Cardiac septum (tissue), 1 donor: ENCODE measurements at regions of chr2 and their contacts with region 1.

Region 1: GRCh38 chr2:236352761-236353593 is 88.8 kb upstream of the ASB18 start:
- DNase-seq: no peak

Region 2: GRCh38 chr2:236250909-236251579 is 101.9 kb before region 1 on chr2:
- intact Hi-C with region 1: no loop called
- DNase-seq: no peak

Region 3: GRCh38 chr2:236417150-236417549 is 64.2 kb after region 1 on chr2:
- intact Hi-C with region 1: no loop called
- DNase-seq: no peak

Region 4: GRCh38 chr2:236512902-236513435 is 160.0 kb after region 1 on chr2:
- intact Hi-C with region 1: loop called (anchors 5 kb)
- DNase-seq: no peak

Region 5: DNA sequence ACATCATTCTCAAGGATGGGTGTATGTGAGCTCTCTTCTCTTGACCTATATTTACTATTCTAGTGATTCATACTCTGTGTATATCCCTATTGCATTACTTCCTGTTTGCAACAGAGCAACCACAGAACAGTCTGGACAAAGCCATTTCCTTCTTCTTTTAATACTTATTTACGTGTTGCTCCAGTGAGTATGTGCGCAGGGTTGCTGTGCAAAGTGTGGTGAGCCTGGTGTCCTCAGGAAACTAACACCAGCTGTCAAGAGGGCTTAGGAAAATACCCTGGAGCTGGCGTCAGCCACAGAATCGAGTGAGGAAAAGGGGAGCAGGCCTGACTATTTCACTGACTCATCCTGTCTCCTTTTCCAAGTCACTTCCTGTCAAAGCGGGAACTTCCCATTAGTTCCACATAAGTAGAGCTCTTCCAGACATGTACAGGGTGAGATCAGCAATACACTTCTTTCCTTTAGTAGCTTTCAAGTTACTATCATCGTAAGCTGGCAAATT is 518.6 kb after region 1 on chr2:
- intact Hi-C with region 1: loop called (anchors 10 kb)
- DNase-seq: no peak

Region 6: GRCh38 chr2:237026981-237027711 is 674.2 kb after region 1 on chr2:
- intact Hi-C with region 1: loop called (anchors 1 kb)
- DNase-seq: peak; percentile 82

Region 7: DNA sequence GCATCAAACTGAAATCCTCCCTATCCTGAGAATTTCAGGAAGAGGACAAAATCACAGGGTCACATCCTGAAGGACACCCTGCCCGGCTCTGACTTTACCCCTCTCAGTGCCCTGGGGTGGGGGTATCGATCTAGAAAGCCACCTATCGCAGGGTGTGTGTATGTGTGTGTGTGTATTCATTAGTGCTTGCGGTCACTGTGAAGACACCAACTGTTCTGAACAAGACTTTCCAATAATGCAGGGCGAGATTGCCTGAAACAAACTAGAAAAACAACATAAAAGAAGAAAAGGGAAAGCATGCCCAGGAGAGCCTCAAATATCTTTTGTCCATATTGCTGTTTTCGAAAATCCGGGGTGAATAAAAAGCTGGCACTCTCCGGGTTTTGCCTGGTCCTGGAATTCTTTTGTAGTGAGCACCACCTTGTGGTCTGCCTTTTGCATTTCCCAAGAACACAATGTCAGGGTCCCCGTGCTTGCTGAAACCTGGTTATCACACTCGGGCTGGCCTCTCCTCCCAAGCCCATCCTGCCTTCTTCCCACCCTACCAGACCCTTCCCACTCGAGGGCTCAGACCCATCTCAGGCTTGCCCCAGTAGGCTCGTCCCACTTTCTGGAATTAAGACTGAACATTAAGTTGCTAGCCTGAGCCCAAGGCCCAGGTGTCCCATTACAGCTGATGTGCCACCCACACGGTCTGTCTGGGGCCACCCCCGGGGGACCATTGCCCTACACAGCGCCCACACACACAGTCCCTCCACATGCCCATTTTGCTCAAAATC is 707.7 kb after region 1 on chr2:
- intact Hi-C with region 1: loop called (anchors 2 kb)
- DNase-seq: no peak